AG04449 (cell line): ENCODE measurements at regions of chr2 and their contacts with region 1.

Region 1: GRCh38 chr2:177604271-177605065 is 211.9 kb downstream of the AGPS start:
- DNase-seq: peak; percentile 38
- H3K4me3 ChIP-seq: peak overlapping the region; percentile 25
- CTCF ChIP-seq: peak; percentile 74

Region 2: DNA sequence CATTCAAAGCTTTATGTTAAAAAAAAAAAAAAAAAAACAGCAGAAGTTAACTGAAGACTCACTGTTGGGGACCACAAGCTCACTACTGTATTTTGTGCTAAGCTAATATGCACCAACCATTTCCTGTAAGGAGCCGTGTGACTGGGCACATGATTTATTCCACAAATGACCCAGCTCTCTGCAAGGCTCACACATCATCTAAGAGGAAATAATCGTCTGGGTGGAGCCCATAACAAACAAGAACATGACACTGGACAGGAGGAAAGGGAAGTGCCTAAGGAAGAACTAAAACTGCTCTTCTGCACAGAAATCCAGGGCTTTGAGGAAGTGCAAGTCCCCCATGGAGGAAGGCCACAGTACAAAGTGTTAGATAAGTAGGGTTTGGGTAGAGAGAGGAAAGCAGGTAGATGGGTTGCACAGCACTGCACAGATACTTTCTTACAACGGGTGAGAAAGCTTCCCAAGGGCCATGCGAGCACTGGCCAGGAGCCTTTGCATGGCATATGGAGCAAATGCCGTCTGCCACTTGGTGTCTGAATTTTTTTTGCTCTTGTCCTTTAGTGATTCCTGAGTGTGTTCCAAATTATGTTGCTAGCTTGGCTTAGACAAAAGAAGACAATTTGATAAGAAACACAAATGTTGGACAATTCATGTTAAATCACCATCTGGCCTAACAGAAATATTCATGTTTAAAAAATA is 364.4 kb before region 1 on chr2:
- CTCF ChIA-PET with region 1: no interaction called
- POLR2A ChIA-PET with region 1: no interaction called
- DNase-seq: no peak
- H3K4me3 ChIP-seq: no peak overlapping the region
- CTCF ChIP-seq: no peak

Region 3: DNA sequence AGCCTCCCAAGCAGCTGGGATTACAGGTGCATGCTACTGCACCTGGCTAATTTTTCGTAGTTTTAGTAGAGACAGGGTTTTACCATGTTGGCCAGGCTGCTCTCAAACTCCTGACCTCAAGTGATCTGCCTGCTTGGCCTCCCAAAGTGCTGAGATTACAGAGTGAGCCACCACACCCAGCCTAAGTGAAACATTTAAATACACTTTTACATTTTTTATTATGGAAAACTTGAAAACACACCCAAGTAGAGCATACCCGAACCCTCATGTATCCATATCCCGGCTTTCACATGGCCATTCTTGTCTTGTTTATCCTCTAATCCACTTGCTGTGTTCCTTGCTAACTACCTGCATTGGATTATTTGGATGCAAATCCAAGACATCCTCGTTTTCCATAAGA is 225.1 kb before region 1 on chr2:
- CTCF ChIA-PET with region 1: no interaction called
- POLR2A ChIA-PET with region 1: no interaction called
- DNase-seq: no peak
- H3K4me3 ChIP-seq: no peak overlapping the region
- CTCF ChIP-seq: no peak

Region 4: GRCh38 chr2:177588671-177589070 is 15.8 kb before region 1 on chr2:
- CTCF ChIA-PET with region 1: interaction called, 18 read pairs
- POLR2A ChIA-PET with region 1: no interaction called
- DNase-seq: no peak
- H3K4me3 ChIP-seq: no peak overlapping the region
- CTCF ChIP-seq: no peak